ENCODE measurements at regions of chr4 and their contacts with region 1.

Region 1: DNA sequence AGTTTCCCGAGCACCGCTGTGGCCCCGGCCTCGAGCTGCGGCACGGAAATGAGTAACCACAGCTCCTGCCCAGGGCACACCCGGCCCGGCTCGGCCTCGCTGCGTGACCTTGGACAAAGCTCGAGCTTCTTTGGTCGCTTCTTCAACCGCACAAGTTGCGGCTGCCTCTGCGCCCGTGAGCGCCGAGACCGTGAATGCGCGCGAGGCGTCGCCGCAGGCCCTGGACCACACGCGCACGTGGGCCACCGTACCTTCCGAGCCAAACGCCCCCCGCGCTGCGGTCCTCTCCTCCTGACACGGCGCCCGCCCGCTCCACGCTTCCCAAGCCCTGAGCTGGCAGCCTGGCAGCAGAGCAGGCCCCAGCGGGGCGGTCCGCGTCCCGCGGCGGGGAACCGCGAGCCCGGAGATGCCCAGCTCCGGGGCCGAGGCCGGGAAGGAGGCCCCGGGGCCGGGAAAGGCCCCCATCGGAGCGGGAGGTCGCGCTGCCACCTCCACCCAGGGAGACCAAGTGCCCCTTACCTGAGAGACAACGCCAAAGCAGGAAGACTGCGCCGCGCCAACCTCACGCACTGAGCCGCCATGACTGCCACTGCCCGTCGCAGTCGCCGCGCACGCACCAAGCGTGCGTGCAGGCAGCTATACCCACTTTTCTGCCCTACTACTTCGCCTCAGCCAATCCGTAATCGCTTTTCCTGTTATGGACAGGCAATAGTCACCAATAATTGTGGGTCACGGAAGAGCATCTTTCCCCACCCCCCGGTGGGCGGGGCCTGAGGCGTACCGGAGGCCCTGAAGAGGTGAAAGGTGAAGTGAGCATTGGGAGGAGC is at the start of gene GRPEL1:
- DNase-seq: peak; percentile 99
- ATAC-seq: peak; percentile 97 to 98
- total RNA-seq, gene GRPEL1: 35.6 to 46.1 TPM

Region 2: DNA sequence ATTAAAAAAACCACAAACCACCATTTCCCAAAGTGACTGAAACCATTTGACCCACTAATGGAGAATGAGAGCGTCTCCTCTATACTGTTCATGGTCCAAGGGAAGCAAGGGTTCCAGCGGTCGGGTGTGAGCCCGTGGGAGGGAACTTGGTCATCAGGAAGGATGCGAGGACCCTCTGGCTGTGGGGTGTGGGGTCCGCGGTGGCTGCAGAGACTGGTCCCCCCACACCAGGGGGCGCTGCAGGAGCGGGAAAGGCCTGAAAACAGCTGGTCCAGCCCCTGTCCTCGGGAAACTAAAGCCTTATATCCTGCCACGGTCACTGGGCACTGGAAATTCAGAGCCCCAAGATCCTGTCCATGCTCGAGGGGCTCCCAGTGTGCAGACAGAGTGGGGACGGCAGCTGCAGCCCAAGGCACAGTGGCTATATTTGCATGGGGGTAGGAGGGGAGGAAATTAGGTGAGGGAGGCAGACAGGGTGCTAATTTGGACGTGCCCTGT is 347.4 kb before region 1 on chr4:
- intact Hi-C with region 1: loop called (anchors 5 to 10 kb)
- DNase-seq: peak; percentile 89
- ATAC-seq: peak; percentile 56 to 67

Region 3: DNA sequence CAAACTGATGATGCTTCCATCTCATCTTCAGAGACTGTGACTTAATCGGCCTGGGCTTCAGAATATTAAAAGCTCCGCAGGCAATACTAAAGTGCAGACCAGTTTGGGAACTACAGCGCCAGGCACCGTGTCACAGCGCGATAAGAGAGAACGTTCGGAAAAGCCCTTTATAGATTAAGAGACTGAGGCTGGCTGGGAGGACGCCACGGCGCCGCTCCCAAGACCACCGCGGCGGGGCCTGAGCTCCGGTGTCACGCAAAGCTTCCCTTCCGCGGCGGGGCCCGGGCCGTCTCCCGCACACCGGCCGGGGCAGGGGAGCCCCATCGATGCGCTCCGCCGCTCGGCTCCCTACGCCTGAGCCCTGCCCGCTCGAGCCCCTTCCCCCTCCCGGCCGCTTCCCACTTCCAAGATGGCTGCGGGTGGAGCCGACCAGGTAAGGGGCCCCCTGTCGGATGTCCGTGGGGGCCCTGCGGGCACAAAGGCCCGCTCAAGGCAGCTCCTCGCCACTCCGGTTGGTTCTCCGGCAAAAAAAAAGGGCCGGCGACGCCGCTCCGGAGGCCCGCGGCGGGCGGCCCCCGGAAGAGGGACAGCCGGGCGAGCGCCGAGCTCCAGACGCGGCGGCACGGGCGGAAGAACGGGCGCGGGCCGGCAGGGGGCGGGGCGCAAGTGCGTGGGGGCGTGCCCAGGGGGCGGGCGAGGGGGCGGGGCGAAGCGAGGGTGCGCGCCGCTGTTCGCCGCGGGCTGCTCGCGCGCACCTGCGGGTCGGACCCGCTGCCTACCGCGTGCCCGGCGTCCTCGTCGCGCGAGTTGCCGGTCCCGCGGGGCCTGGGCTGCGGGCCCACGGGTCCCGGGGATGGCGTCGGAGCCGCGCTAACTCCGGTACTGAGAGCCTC is 158.3 kb before region 1 on chr4 and contains the start of gene TBC1D14:
- intact Hi-C with region 1: loop called in 1 of 2 experiments (anchors 5 kb)
- DNase-seq: peak; percentile 91
- ATAC-seq: peak; percentile 96
- total RNA-seq, gene TBC1D14: 34.7 to 35.9 TPM

Region 4: DNA sequence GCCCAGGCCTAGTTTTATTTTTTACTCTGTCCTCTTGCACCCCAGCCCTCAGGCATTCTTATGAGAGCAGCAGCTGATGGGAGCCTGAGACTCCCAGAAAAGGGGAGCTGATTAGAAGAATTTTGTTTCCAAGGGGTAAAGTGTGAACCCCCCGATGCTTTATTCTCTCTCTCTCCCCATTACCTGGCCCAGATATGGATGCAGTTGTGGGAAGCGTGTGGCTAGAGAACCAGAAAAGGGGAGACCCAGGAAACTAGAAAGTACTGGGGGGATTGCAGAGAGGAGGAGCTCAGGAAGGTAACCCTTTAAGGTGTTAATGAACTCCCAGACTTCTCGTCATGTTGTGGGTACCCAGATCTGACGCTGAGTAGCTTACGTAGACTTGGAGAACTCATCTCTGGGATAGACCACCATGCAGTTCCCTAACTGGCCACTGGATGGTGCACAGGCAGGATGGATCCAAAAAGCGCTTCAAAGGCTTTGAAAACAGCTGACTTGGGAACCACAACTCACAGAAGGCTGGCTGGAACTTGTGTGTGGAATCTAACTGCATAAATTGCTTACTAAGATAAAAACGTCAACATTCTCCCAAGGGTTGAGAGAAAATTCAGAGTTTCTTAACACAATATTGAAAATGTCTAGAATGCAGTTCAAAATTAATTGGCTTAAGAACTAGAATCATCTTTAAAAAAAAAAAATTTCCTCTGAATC is 93.4 kb before region 1 on chr4:
- intact Hi-C with region 1: loop called in 1 of 2 experiments (anchors 5 kb)
- DNase-seq: peak; percentile 80
- ATAC-seq: peak; percentile 94 to 96

Region 5: GRCh38 chr4:6986781-6987587 is 80.7 kb before region 1 on chr4:
- intact Hi-C with region 1: loop called in 1 of 2 experiments (anchors 5 kb)
- DNase-seq: peak; percentile 95
- ATAC-seq: peak; percentile 96

Region 6: DNA sequence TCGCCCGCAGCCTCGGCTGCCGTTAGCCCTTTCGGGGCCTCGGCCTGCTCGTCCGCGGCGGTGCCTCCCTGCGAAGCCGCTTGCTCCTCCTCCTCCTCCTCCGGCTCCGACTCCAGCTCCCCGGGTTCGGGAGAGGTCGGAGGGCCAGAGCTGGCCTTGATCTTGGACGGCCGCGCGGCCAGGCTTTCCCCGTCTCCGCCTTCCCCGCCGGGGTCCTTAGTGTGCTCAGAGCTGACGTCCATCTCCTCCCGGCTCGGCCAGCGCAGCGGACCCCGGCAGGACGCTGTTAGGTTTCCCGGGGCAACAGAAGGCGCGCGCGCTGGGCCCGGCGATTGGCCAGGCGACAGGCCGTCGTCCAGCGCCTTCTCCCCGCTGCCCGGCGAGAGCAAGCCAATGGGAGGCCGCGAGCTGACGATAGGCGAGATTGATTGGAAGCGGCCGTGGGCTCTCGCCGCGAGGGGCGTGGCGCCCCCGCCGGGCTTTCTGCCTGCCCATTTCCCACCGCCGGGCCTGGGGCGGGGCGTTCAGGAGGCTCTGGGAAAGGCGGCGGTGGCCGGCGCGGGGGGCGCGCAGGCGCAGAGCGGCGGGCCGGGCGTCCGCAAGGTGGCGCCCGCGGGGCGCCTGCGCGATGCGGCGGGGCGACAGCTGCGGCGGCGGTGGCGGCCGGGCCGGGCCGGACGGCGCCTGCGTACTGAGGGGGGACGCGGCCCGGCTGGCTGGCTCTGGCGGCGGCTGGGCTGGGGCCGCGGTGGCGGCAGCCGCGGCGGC is 24.8 kb before region 1 on chr4 and contains the start of gene TADA2B:
- intact Hi-C with region 1: loop called in 1 of 2 experiments (anchors 2 kb)
- DNase-seq: peak; percentile 98
- ATAC-seq: peak; percentile 94
- total RNA-seq, gene TADA2B: 23.2 to 30.7 TPM

Measured in left cardiac atrium (tissue), 4 donors.